ENCODE measurements at regions of chr9 and their contacts with region 1.

Region 1: GRCh38 chr9:84387821-84388220 is 47.3 kb upstream of the SLC28A3 start:
- H3K4me3 Mint-ChIP-seq: no peak overlapping the region
- H3K27ac Mint-ChIP-seq: no peak overlapping the region
- H3K4me1 Mint-ChIP-seq: peaks cover 7% of the 10 kb centered on the region
- H3K27me3 Mint-ChIP-seq: no peaks in the 10 kb centered on the region

Region 2: GRCh38 chr9:84343111-84343521 is 44.7 kb before region 1 on chr9:
- intact Hi-C with region 1: no loop called
- H3K4me3 Mint-ChIP-seq: no peak overlapping the region
- H3K27ac Mint-ChIP-seq: no peak overlapping the region
- H3K4me1 Mint-ChIP-seq: no peaks in the 10 kb centered on the region
- H3K27me3 Mint-ChIP-seq: no peaks in the 10 kb centered on the region

Region 3: DNA sequence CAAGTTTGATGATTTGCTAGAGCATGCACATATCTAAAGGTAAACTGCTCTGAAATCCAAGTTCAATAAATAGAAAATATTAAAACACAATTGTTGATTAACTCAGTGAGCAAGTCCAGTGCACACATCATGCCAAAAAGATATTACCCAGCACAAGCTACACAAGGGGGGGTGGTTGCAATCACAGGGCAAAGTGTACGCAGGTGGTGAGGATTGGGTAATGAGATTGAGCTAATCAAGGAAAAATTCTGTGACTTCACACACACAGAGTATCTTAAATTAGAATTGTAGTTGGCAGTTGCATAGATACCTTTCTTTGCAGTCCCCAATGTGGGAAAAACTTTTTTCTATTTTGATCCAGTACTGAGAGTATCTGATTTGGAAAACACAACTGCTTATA is 125.7 kb after region 1 on chr9:
- intact Hi-C with region 1: no loop called
- H3K4me3 Mint-ChIP-seq: no peak overlapping the region
- H3K27ac Mint-ChIP-seq: no peak overlapping the region
- H3K4me1 Mint-ChIP-seq: no peaks in the 10 kb centered on the region
- H3K27me3 Mint-ChIP-seq: no peaks in the 10 kb centered on the region

Region 4: DNA sequence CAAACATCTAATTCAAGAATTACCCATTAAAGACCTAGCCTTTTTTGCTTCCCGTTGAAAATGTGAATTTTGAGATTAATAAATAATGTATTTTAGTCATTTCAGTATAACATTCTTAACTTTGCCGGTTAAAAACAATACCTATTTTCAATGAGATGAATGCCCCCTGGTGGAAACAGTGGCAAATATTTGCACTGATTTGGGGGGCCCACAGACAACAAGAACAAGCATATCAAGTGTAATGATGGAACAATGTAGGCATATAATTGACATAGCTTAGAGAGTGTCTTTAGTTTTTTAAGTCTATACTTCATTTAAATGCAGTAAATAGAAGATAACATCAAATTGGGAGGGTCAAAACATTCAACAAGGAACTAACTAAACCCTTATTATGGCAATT is 393.6 kb after region 1 on chr9:
- intact Hi-C with region 1: loop called (anchors 5 kb)
- H3K4me3 Mint-ChIP-seq: no peak overlapping the region
- H3K27ac Mint-ChIP-seq: no peak overlapping the region
- H3K4me1 Mint-ChIP-seq: no peaks in the 10 kb centered on the region
- H3K27me3 Mint-ChIP-seq: peaks cover 9% of the 10 kb centered on the region